Adrenal gland (tissue), 19 donors: ENCODE measurements at regions of chr21 and their contacts with region 1.

Region 1: DNA sequence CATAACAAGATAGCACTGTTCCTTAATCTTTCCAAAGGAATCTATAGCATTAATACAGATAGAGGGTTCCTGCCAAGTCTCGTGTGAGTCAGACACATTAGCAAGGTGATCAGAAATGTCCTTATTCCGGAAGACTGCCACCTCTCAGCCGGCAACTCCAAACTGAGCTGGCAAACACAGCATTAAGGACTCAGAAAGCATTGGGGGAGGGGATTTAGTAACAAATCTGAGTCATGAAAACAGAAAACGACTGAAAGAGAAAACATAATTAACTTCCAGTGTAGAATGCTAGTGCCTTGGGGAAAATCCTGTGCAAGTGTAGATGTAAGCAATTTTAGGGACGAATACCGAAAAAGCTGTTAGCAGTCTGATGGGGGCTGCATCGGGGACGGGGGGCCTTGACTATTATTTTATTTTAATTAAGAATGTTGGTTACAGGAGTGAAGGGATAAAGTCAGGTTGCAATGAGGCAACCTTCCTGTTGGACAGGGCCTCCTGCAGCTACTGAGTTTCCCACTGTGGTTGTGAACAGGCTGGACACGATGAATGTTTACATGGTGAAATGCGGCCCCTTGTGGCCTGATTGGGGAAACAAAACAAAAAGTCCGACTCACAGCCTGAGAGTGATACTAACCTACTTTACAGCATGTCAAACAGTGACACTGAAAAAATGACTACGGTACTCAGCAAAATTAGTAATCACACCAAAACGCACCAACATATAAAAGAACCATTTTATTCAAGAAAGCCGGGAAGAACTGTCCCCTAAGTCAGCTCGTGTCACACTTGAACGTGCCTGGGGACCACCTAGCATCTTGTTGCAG is 20.7 kb downstream of the MIS18A start:
- DNase-seq: peak; percentile 72 to 93 (median 82)
- H3K4me3 ChIP-seq: no peak overlapping the region
- H3K27ac ChIP-seq: no peak overlapping the region
- H3K4me1 ChIP-seq: peaks cover 4 to 23% of the 10 kb centered on the region in 2 donors
- H3K27me3 ChIP-seq: no peaks in the 10 kb centered on the region
- CTCF ChIP-seq: peak; percentile 57 to 92 (median 84)
- POLR2A ChIP-seq: no peak

Region 2: GRCh38 chr21:31781737-31782136 is 476.4 kb before region 1 on chr21:
- intact Hi-C with region 1: loop called in 1 of 2 experiments (anchors 5 kb)
- DNase-seq: peak; percentile 33 to 65 (median 57)
- H3K4me3 ChIP-seq: no peak overlapping the region
- H3K27ac ChIP-seq: no peak overlapping the region
- H3K4me1 ChIP-seq: no peaks in the 10 kb centered on the region
- H3K27me3 ChIP-seq: no peaks in the 10 kb centered on the region
- CTCF ChIP-seq: no peak
- POLR2A ChIP-seq: no peak

Region 3: DNA sequence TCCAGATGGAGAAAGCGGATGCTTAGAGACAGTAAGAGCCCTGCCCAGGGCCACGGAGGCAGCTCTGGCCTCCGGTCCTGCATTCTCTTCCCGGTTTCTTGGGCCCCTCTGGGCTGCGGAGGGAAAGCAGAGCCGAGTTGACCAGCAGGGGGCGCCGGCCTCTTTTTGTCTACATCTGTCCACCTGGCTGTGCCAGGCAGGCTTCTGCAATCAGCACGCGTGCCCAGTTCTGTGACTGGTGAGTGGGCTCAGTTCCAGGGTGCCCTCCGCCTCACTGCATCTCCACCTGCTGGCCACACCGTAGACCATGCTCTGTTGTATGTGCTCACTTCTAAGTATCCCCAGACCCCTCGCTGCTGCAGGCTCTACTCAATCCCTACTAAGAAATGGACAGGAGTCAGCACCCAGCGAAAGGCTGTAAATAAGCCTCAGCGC is 392.1 kb before region 1 on chr21:
- intact Hi-C with region 1: loop called (anchors 5 kb)
- DNase-seq: peak; percentile 82 to 95 (median 92)
- H3K4me3 ChIP-seq: no peak overlapping the region
- H3K27ac ChIP-seq: no peak overlapping the region
- H3K4me1 ChIP-seq: no peaks in the 10 kb centered on the region
- H3K27me3 ChIP-seq: peaks cover 3% of the 10 kb centered on the region
- CTCF ChIP-seq: peak; percentile 66 to 87 (median 81)
- POLR2A ChIP-seq: no peak

Region 4: DNA sequence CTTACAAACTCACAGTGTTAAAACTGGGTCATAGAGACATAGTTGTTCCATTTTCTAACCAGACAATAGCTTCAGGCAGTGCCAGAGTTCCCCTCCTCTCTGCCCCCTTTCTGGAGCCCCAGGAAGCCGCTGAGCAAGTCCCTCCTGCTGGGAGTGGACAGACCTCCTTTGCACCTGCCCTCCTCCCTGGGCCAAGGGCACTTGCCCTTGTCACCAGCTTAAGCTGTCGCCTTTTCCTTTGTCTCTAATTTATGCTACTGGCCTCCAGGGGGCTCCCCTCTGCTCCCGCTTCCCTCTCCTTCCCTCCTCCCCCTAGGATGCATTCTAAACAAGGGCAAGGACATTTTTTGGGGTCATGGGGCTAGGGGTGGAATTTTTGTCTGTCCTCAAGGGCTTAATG is 161.8 kb before region 1 on chr21:
- intact Hi-C with region 1: loop called in 1 of 2 experiments (anchors 10 kb)
- DNase-seq: peak in 3 of 7 donors; percentile 17 to 27 (median 26)
- H3K4me3 ChIP-seq: no peak overlapping the region
- H3K27ac ChIP-seq: no peak overlapping the region
- H3K4me1 ChIP-seq: no peaks in the 10 kb centered on the region
- H3K27me3 ChIP-seq: no peaks in the 10 kb centered on the region
- CTCF ChIP-seq: peak in 3 of 6 experiments; percentile 11 to 31 (median 25)
- POLR2A ChIP-seq: no peak

Region 5: GRCh38 chr21:33747420-33747819 is 1489.2 kb after region 1 on chr21:
- intact Hi-C with region 1: no loop called
- DNase-seq: no peak
- H3K4me3 ChIP-seq: no peak overlapping the region
- H3K27ac ChIP-seq: no peak overlapping the region
- H3K4me1 ChIP-seq: peaks cover 3 to 22% of the 10 kb centered on the region in 2 donors
- H3K27me3 ChIP-seq: no peaks in the 10 kb centered on the region
- CTCF ChIP-seq: no peak
- POLR2A ChIP-seq: no peak